Activated T-helper 1 cell treated with anti-CD3 and anti-CD28 coated beads, Interleukin-12 subunit alpha, Interleukin-12 subunit beta, Interleukin-2, Interleukin-4 antibody, amounts not matched to agents 30 ng/mL and 10 ng/mL and 1 ng/mL, durations not matched to agents 14 hours and 24 hours and 36 hours (primary cell): ENCODE measurements at regions of chr11 and their contacts with region 1.

Region 1: GRCh38 chr11:123357961-123358841 is 71.9 kb upstream of the GRAMD1B start:
- DNase-seq: peak; percentile 53
- H3K4me3 Mint-ChIP-seq: peak overlapping the region; percentile 99
- H3K27ac Mint-ChIP-seq: peak overlapping the region; percentile 97
- H3K4me1 Mint-ChIP-seq: peaks cover 77% of the 10 kb centered on the region
- H3K27me3 Mint-ChIP-seq: no peaks in the 10 kb centered on the region

Region 2: GRCh38 chr11:122749005-122749687 is 609.1 kb before region 1 on chr11:
- intact Hi-C with region 1: loop called (anchors 10 kb)
- DNase-seq: peak; percentile 50
- H3K4me3 Mint-ChIP-seq: no peak overlapping the region
- H3K27ac Mint-ChIP-seq: peak overlapping the region; percentile 5
- H3K4me1 Mint-ChIP-seq: peaks cover 20% of the 10 kb centered on the region
- H3K27me3 Mint-ChIP-seq: peaks cover 10% of the 10 kb centered on the region

Region 3: DNA sequence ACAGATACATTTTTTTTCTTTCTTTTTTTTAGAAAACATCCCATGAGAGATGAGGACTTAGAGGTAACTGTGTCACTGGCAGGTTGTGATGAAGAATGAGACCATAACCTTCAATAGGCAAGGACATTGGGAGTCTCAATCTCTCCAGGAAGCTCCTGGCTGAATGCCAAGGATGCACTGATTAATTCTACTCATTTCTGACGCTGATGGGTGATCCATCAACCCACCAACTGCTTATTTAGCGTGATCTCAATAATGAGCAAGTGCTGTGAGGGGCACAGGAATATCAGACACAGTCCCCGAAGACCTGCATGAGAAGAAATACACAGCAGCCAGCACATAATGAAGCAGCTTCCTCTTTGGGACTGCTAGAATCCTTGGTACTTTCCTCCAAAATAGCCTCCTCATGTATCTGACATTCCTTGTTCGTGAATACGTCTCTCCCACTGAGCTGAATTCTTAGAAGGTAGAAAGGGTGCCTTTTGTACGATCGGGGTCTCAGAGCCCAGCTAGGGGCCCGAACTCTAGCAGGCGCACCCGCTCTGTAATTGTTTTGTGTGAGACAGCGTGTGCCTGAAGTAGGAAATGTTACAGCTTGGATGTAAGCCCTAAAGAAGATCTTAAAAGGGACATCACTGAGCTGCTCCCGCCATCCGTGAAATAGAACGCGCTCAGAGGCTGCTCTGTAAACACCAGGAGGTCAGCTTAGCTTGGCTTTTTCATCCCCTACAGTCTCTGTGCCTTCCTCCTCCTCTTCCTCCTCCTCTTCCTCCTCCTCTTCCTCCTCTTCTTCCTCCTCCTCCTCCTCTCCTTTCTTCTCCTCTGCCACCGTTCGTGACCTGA is 170.3 kb before region 1 on chr11:
- intact Hi-C with region 1: no loop called
- DNase-seq: no peak
- H3K4me3 Mint-ChIP-seq: no peak overlapping the region
- H3K27ac Mint-ChIP-seq: no peak overlapping the region
- H3K4me1 Mint-ChIP-seq: peaks cover 8% of the 10 kb centered on the region
- H3K27me3 Mint-ChIP-seq: peaks cover 59% of the 10 kb centered on the region

Region 4: DNA sequence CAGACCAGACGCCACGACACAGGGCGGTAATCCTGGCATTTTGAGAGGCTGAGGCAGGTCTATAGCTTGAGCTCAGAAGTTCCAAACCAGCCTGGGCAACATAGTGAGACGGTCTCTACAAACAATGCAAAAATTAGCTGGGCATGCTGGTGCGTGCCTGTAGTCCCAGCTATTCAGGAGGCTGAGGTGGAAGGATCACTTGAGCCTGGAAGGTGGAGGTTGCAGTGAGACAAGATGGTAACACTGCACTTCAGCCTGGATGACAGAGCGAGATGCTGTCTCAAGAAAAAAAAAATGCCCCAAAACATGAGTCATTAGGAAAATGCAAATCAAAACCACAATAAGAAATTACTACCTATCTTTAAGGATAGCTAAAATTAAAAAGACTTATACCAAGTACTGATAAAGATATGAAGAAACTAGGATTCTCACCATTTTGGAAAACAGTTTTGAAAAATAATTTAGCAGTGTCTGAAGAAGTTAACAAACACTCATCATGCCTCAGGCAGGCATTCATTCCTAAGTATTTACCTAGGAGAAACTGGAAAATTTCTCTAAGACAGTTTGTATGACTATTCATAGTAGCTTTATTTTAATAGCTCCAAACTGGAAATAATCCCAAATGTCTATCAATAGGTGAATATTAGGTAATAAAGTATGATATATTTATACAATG is 19.7 kb before region 1 on chr11:
- intact Hi-C with region 1: loop called (anchors 1 kb)
- DNase-seq: no peak
- H3K4me3 Mint-ChIP-seq: no peak overlapping the region
- H3K27ac Mint-ChIP-seq: no peak overlapping the region
- H3K4me1 Mint-ChIP-seq: peaks cover 12% of the 10 kb centered on the region
- H3K27me3 Mint-ChIP-seq: peaks cover 9% of the 10 kb centered on the region

Region 5: GRCh38 chr11:123407130-123407995 is 49.2 kb after region 1 on chr11:
- intact Hi-C with region 1: loop called (anchors 1 kb)
- DNase-seq: peak; percentile 20
- H3K4me3 Mint-ChIP-seq: peak overlapping the region; percentile 77
- H3K27ac Mint-ChIP-seq: peak overlapping the region; percentile 90
- H3K4me1 Mint-ChIP-seq: peaks cover 70% of the 10 kb centered on the region
- H3K27me3 Mint-ChIP-seq: no peaks in the 10 kb centered on the region

Region 6: DNA sequence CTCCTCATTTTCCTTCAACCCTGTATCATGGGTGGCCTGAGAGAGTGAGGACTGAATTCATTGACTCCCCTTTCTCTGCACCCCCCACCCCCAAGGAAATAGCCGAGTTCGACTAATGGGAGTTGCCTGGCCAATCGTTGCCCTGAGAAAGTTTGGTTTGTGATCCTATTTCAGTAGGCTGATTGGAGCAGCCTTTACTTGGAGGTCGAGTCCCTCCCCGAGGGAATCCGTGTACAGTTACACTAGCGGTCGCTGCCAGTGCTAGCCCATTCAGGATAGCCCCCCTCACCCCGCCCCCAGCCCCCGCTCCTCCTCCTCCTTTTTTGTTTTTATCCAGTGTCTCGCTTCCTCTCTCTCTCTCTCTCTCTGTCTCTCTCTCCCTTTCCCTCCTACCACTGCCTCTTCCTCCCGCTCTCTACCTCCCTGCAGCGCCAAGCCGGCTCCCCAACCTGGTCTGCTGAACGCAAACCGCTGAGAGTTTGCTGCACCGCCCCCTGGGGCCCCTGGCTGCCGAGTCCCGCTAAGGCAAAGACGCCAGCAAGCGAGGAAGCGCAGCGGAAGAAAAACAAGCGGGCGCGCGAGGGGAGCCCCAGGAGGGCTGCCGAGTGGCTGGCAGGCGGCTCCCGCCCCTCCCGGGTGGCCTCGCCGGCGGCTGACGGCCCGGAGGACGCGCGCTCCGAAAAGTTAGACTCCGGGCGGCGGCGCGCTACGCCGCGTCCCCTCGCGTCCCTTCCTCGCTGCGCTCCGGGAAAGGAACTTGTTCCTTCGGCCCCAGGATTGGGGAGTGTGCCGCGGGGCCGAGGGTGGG is 71.9 kb after region 1 on chr11 and contains the start of gene GRAMD1B:
- intact Hi-C with region 1: loop called (anchors 1 kb)
- DNase-seq: peak; percentile 78
- H3K4me3 Mint-ChIP-seq: peak within 1 kb of the TSS; percentile 91
- H3K27ac Mint-ChIP-seq: peak within 1 kb of the TSS; percentile 93
- H3K4me1 Mint-ChIP-seq: peaks cover 76% of the 10 kb centered on the region
- H3K27me3 Mint-ChIP-seq: no peaks in the 10 kb centered on the region
- total RNA-seq, gene GRAMD1B: 154 and 155 TPM in 2 replicates

Region 7: DNA sequence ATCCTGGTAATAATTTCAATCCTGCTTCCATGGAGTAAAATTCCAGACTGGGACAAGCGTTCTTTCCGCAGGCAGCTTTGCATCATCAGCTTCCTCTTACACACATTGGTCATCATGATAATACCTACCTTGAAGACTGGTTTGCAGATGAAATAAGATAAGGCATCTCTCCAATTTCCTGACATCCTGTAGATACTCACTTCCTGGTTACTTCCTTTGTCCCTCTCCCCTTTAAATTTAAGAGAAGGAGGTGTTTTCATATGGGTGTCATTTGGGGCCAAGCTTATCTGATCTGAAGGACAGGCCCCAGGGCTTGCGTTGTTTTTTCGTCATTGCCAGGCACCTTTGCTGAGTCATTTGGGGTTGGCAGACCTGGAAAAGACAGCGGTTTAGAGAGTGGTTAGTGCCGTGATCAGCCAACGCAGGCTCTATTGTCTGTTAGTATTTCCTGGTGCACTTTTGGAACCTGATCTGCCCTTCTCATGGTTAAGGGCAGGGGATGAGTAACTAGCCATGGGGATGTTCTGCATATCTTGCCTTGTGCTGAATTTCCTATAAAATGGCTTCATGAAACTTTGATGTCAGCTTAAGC is 96.0 kb after region 1 on chr11:
- intact Hi-C with region 1: loop called (anchors 1 kb)
- DNase-seq: peak; percentile 74
- H3K4me3 Mint-ChIP-seq: peak overlapping the region; percentile 82
- H3K27ac Mint-ChIP-seq: peak overlapping the region; percentile 97
- H3K4me1 Mint-ChIP-seq: peaks cover 98% of the 10 kb centered on the region
- H3K27me3 Mint-ChIP-seq: no peaks in the 10 kb centered on the region

Region 8: GRCh38 chr11:123690485-123690884 is 332.3 kb after region 1 on chr11:
- intact Hi-C with region 1: no loop called
- DNase-seq: no peak
- H3K4me3 Mint-ChIP-seq: no peak overlapping the region
- H3K27ac Mint-ChIP-seq: no peak overlapping the region
- H3K4me1 Mint-ChIP-seq: peaks cover 5% of the 10 kb centered on the region
- H3K27me3 Mint-ChIP-seq: peaks cover 18% of the 10 kb centered on the region